Stomach (tissue), 19 donors: ENCODE measurements at regions of chr11 and their contacts with region 1.

Region 1: DNA sequence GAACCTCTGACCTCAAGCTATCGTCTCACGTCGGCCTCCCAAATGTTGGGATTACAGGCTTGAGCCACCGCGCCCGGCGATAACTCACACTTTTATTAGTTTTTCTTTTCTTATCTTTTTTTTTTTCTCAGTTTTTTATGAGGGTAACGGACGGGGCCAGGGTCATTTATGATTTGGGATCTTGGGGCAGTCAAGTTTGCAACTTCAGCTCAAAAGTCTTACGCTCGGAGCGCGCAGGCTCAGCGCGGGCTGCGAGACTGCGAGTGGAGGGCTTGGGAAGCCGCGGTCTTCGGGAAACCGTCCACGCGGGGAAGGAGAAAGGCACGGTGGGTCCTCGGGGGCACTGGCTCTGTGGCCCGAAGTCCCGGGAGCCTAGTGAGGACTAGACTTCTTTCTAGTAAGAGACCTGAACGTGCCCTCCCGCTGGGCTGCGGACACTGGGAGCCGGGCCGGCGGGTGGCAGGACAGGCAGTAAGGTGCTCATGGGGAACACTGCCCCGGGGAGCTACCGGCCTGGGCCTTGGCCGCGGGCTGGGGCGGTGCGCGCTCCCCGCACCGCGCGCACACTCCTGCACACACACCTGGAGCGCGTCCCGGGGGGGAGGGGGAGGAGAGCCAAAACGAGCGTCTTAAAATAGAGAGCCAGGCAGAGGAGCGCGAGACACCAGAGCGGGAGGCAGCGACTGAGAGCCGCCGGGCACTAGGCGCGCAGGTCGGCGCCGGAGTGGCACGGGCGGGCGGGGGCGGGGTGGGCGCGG is 476 bp upstream of the BARX2 start:
- DNase-seq: peak; percentile 77 to 80
- H3K4me3 ChIP-seq: peak overlapping the region; percentile 43 to 55 (median 48)
- H3K27ac ChIP-seq: peak overlapping the region; percentile 60 to 81 (median 77)
- H3K4me1 ChIP-seq: peaks cover 32 to 42% (median 40%) of the 10 kb centered on the region in 4 donors
- H3K27me3 ChIP-seq: peaks cover 10 to 89% (median 53%) of the 10 kb centered on the region in 3 donors
- CTCF ChIP-seq: no peak
- EP300 ChIP-seq: no peak
- POLR2A ChIP-seq: no peak

Region 2: GRCh38 chr11:129694538-129694937 is 319.4 kb after region 1 on chr11:
- intact Hi-C with region 1: loop called (anchors 5 kb)
- DNase-seq: no peak
- H3K4me3 ChIP-seq: no peak overlapping the region
- H3K27ac ChIP-seq: no peak overlapping the region
- H3K4me1 ChIP-seq: peaks cover 0 to 12% (median 10%) of the 10 kb centered on the region in 4 donors
- H3K27me3 ChIP-seq: peaks cover 0 to 17% (median 0%) of the 10 kb centered on the region in 3 donors
- CTCF ChIP-seq: peak in 1 of 7 experiments; percentile 12
- EP300 ChIP-seq: no peak
- POLR2A ChIP-seq: no peak